Posterior vena cava (tissue), 2 donors: ENCODE measurements at regions of chr22 and their contacts with region 1.

Region 1: GRCh38 chr22:21629262-21630149 is at the start of gene YDJC:
- DNase-seq: peak; percentile 98
- total RNA-seq, gene YDJC: 7.1 to 8.5 TPM

Region 2: DNA sequence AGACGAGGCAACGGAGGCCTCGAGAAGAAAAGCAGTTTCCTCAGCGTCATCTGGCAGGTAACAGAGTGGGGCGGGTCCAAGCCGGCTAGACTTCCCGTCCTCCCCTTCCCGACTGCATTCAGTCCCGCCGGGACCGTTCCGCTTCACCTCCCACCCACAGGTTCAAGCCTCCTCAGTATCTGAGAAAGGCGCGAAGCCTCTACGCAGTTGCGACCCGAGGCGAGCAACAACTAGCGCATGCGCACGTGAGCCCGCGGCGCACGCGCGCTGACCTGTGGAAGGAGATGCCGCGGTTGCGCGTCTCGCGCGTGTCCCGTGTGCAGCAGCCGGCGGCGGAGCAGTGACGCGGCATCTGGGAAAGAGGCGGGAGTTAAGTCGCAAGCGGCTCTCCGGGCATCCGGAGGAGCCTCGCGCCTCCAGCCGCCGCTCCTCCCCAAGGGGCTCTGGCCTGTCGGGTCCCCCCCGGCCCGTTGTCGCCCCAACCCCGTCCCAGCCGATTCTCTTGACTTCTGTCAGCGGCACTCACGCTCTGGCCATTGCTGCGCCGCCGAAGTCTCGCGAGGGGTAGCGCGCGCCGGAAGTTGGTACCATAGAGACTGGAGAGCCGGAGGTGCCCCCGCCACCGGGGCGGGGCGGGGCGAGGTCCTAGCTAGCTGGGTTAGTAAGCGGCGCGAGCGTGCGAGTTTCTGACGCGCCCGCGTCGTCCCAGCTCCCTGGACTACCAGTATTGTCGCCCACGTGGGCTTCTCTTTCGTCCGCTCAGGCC is 627.8 kb before region 1 on chr22 and contains the start of gene THAP7:
- intact Hi-C with region 1: no loop called
- DNase-seq: peak; percentile 99
- total RNA-seq, gene THAP7: 16.4 to 20.5 TPM

Region 3: GRCh38 chr22:21567456-21568346 is 61.8 kb before region 1 on chr22 and contains the start of gene UBE2L3:
- intact Hi-C with region 1: loop called (anchors 5 kb)
- DNase-seq: peak; percentile 95
- total RNA-seq, gene UBE2L3: 36.2 to 36.8 TPM

Region 4: GRCh38 chr22:21677606-21678443 is 48.3 kb after region 1 on chr22:
- intact Hi-C with region 1: no loop called
- DNase-seq: no peak